ENCODE measurements at regions of chr1 and their contacts with region 1.

Region 1: GRCh38 chr1:182143154-182143657 is 81.7 kb upstream of the ZNF648 start:
- DNase-seq: peak; percentile 94
- ATAC-seq: peak; percentile 64

Region 2: DNA sequence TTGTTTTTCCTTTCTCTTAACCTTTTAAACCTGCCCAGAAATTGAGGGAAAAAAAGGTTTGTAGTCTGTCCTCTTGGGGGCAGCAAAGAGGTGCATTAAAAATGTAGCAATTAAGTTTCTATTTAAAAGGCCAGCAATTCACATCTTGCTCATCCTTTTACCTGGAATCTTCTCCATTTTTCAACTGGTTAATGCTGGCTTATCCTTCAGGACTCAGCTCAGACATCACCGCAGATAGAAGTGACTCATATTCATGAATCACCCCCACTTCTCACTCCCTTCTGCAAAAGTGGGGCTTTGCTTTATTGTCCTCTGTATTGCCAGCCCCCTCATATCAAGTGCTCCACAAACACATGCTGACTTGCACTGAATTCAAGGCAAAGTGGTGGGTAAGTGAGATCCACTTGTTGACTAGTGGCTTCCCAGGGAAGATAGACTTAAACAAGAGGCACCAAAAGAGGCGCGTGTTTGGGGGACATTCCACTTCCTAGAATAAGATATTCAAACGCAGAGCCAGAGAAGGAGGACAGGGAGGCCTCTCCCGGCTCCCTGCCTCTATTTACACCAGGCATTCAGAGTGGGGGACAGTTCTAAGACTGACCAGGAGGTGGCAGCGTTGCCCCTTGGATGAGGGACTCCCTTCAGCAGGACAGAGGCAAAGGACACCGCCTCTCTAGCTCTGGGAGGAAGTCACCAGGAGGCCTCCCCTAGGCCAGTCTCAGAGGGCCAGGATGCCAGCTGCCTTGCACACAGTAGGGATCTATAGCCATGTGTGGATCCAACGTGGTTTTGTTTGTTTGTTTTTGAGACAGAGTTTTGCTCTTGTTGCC is 58.5 kb before region 1 on chr1:
- intact Hi-C with region 1: loop called (anchors 2 kb)
- DNase-seq: peak; percentile 91
- ATAC-seq: peak; percentile 93

Region 3: DNA sequence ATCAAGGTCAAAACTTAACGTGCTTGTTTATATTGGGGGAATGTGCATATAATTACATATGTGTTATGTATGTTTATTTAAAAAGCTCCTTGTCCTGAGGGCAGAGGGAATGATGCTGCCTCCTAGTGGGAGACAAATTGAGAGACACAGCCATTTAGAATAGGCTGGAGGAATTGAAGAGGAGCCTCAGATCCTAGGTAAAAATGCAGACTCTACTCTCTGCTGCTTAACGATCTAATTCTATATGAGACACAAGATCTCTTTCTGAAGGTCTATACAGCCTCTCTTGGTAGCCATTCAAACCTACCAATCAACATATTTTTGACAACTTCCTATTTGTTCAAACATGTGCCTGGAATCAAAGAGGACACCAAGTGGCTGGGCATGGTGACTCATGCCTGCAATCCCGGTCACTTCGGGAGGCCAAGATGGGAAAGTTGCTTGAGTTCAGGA is 54.9 kb after region 1 on chr1:
- intact Hi-C with region 1: loop called (anchors 2 kb)
- DNase-seq: no peak
- ATAC-seq: no peak

Region 4: DNA sequence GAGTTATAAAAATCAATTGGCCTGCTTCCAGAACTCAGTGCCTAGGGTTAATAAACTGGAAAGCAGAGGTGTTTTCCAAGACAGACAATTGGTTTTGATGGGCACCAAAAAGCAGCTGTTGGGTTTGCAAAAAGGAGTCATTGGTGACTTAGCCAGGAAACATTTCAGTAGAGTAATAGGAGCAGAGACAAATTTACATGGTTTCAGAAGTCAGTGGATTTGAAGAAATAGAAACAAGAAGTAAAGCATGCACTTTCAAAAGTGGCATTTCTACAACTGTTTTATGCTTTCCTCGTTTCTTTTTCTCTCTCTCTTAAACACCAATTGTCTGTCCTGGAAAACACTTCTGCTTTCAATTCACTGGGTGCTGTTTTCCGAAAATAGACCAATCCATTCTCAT is 160.6 kb after region 1 on chr1:
- intact Hi-C with region 1: loop called (anchors 2 kb)
- DNase-seq: no peak
- ATAC-seq: no peak

Measured in Right ventricle myocardium inferior (tissue), 1 donor.